ENCODE measurements at regions of chr3 and their contacts with region 1.

Region 1: DNA sequence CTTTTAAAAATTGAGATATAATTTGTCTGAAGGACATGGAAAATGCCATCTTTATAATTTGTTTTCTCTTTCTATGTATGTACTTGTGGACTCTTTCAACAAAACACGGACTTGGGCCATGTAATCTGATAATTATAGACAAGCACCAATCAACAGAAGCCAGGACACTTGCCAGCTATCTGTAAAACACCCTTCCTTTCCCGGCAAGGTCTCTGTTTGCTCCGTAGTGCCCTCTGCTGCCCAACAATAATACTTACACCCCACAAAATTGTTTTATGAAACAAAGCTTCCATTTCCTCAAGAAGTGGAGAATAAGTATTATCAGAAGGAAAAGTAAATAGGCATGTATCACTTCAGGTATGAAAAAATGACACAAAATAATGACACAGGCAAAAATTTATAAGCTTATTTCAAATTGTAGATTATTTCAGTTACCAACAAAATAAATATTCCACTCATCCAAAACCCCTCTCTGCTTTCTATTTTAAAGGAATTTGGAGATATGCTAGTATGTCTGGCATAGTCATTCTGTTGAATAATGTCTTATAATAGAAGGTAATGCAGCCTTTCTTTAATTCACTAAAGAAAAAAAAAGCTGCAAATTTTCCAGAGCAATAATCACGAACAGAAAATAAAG is 32.8 kb downstream of the MYH15 start:
- DNase-seq: no peak
- H3K4me3 ChIP-seq: no peak overlapping the region
- CTCF ChIP-seq: peak; percentile 64

Region 2: GRCh38 chr3:107540857-107541256 is 936.8 kb before region 1 on chr3:
- CTCF ChIA-PET with region 1: no interaction called
- POLR2A ChIA-PET with region 1: no interaction called
- DNase-seq: no peak
- H3K4me3 ChIP-seq: no peak overlapping the region
- CTCF ChIP-seq: no peak

Region 3: GRCh38 chr3:107938143-107938542 is 539.5 kb before region 1 on chr3:
- CTCF ChIA-PET with region 1: interaction called, 17 read pairs
- POLR2A ChIA-PET with region 1: no interaction called
- DNase-seq: no peak
- H3K4me3 ChIP-seq: no peak overlapping the region
- CTCF ChIP-seq: no peak

Region 4: DNA sequence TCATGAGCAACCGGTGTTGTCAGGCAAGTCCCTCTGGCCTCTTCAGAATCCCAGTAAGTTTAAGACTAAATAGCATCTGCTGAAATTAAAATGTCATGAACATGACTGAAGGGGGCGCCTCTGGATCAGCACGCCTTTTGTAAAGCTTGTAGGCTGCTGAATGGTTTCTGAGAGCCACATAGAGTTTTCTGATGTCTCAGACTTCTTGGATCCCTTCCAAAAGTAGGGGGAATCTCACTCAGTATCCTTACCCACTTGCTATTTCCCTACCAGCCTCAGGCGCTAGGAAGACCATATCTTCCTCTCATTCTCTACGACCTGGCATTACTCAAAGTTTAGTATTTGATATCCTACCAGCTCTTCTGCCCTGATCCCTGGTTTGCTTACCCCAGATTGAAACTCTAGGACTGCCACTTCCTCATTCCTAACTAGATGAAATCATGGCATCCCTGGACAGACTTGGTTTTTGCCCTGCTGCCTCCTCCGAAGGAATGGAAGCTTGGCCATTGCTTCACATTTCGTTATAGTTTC is 324.1 kb before region 1 on chr3:
- CTCF ChIA-PET with region 1: interaction called, 47 read pairs
- POLR2A ChIA-PET with region 1: no interaction called
- DNase-seq: no peak
- H3K4me3 ChIP-seq: no peak overlapping the region
- CTCF ChIP-seq: peak; percentile 33

Region 5: DNA sequence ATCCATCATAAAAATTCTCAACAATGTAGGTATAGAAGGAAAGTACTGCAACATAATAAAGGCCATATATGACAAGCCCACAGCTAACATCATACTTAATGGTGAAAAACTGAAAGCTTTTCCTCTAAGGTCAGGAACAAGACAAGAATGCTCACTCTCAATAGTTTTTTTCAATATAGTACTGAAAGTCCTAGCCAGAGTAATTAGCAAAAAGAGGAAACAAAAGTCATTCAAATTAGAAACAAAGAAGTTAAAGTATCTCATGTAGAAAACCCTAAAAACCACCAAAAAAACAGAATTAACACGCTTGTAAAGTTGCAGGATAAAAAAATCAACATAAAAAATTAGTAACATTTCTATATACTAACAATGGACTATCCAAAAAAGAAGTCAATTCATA is 29.0 kb before region 1 on chr3:
- CTCF ChIA-PET with region 1: interaction called, 13 read pairs
- POLR2A ChIA-PET with region 1: no interaction called
- DNase-seq: no peak
- H3K4me3 ChIP-seq: no peak overlapping the region
- CTCF ChIP-seq: no peak

Region 6: GRCh38 chr3:108461661-108462111 is 15.9 kb before region 1 on chr3:
- CTCF ChIA-PET with region 1: interaction called, 52 read pairs
- POLR2A ChIA-PET with region 1: no interaction called
- DNase-seq: no peak
- H3K4me3 ChIP-seq: no peak overlapping the region
- CTCF ChIP-seq: no peak

Region 7: GRCh38 chr3:108489771-108490170 is 12.1 kb after region 1 on chr3:
- CTCF ChIA-PET with region 1: interaction called, 38 read pairs
- POLR2A ChIA-PET with region 1: no interaction called
- DNase-seq: no peak
- H3K4me3 ChIP-seq: no peak overlapping the region
- CTCF ChIP-seq: peak; percentile 50

Region 8: GRCh38 chr3:108552267-108553159 is 74.9 kb after region 1 on chr3:
- CTCF ChIA-PET with region 1: interaction called, 11 read pairs
- POLR2A ChIA-PET with region 1: no interaction called
- DNase-seq: no peak
- H3K4me3 ChIP-seq: no peak overlapping the region
- CTCF ChIP-seq: no peak